IMR-90 (cell line): ENCODE measurements at regions of chr7 and their contacts with region 1.

Region 1: DNA sequence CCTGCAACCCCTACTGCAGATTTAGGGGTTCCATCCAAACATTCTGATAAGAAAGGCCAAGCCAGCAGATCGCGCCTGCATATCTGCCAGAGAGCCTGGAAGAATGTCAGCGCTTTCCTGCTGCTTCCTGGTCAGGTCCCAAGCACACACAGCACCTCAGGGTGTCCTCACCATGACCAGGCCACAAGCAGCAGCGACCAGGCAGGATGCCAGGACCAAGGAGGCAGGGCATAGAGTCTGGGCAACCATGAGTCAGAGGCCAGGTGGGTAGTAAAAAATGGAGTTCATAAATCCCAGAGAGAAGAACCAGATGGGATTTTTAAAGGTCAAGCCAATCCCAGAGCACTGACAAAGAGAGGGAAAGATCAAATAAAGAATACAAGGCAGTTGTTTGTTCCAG is 5.5 kb upstream of the FAM131B start:
- DNase-seq: no peak
- ATAC-seq: no peak
- H3K4me3 ChIP-seq: no peak overlapping the region
- H3K27ac ChIP-seq: no peak overlapping the region
- H3K4me1 ChIP-seq: peaks cover 4% of the 10 kb centered on the region; the same call in 1 of the 2 replicates
- H3K27me3 ChIP-seq: peaks cover 25% of the 10 kb centered on the region
- CTCF ChIP-seq: no peak
- POLR2A ChIP-seq: no peak
- RAD21 ChIP-seq: no peak

Region 2: GRCh38 chr7:143299840-143300239 is 68.1 kb before region 1 on chr7:
- CTCF ChIA-PET with region 1: no interaction called
- POLR2A ChIA-PET with region 1: no interaction called
- dilution Hi-C with region 1: no loop called
- in situ Hi-C with region 1: loop called (anchors 5 kb)
- intact Hi-C with region 1: no loop called
- DNase-seq: no peak
- ATAC-seq: no peak; the same call in 1 of the 2 replicates
- H3K4me3 ChIP-seq: no peak overlapping the region
- H3K27ac ChIP-seq: no peak overlapping the region
- H3K4me1 ChIP-seq: peaks cover 18% of the 10 kb centered on the region
- H3K27me3 ChIP-seq: no peaks in the 10 kb centered on the region
- CTCF ChIP-seq: peak; percentile 35
- POLR2A ChIP-seq: no peak
- RAD21 ChIP-seq: no peak

Region 3: GRCh38 chr7:143846692-143847091 is 478.7 kb after region 1 on chr7:
- CTCF ChIA-PET with region 1: no interaction called
- POLR2A ChIA-PET with region 1: no interaction called
- dilution Hi-C with region 1: no loop called
- in situ Hi-C with region 1: no loop called
- intact Hi-C with region 1: no loop called
- DNase-seq: no peak
- ATAC-seq: no peak
- H3K4me3 ChIP-seq: no peak overlapping the region
- H3K27ac ChIP-seq: no peak overlapping the region
- H3K4me1 ChIP-seq: no peaks in the 10 kb centered on the region
- H3K27me3 ChIP-seq: no peaks in the 10 kb centered on the region
- CTCF ChIP-seq: no peak
- POLR2A ChIP-seq: no peak
- RAD21 ChIP-seq: no peak